T-cell (primary cell): ENCODE measurements at regions of chr17 and their contacts with region 1.

Region 1: DNA sequence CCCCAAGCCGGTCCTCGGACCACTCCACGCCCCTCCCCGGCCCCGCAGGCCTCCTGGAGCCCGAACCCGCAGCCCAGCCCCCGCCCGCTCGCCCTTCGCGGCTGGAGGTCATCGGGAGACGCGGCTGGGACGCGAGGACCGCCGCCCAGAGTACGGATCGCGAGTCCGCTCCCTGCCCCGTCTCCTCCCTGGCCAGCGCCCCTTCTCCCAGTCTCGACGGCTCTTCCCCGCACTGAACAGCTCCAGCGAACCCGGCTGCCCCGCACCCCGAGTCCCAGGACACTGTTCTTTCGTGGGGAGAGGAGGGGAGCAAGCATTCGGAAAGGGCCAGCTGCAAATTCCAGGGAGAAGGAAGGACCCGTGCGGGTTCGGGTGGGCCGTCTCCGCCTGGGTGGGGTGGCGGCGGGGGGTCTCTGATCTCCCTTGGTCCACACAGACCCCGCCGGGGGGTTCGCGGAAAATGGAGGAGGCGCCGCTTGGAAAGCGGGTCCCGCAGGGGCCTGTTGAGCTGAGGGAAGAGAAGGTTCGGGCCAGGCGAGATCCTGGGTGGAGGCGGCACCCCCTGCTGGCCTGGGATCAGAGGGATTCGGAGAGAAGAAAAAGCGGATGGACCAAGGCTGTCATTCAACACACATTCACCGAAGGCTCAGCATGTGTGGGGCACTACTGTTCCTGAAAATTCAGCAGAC is 632 bp upstream of the RTN4RL1 start:
- DNase-seq: peak in 3 of 35 experiments; percentile 13 to 49 (median 29)
- ATAC-seq: no peak
- H3K4me3 ChIP-seq: peak overlapping the region; percentile 46 to 54
- H3K4me3 Mint-ChIP-seq: peak overlapping the region; percentile 78 to 81 (median 80)
- H3K27ac ChIP-seq: no peak overlapping the region
- H3K27ac Mint-ChIP-seq: no peak overlapping the region
- H3K4me1 ChIP-seq: peaks cover 12 to 50% of the 10 kb centered on the region in 2 experiments
- H3K4me1 Mint-ChIP-seq: peaks cover 22 to 34% (median 27%) of the 10 kb centered on the region in 3 donors
- H3K27me3 ChIP-seq: peaks cover 2 to 78% of the 10 kb centered on the region in 2 experiments
- H3K27me3 Mint-ChIP-seq: peaks cover 9 to 25% of the 10 kb centered on the region in 2 donors

Region 2: GRCh38 chr17:2218426-2218825 is 192.7 kb after region 1 on chr17:
- CTCF ChIA-PET with region 1: no interaction called
- POLR2A ChIA-PET with region 1: interaction called in 1 of 2 experiments, 10 read pairs
- DNase-seq: no peak
- ATAC-seq: no peak
- H3K4me3 ChIP-seq: no peak overlapping the region
- H3K4me3 Mint-ChIP-seq: no peak overlapping the region
- H3K27ac ChIP-seq: no peak overlapping the region
- H3K27ac Mint-ChIP-seq: peak overlapping the region; percentile 76 to 81
- H3K4me1 ChIP-seq: peaks cover 25 to 44% of the 10 kb centered on the region in 2 experiments
- H3K4me1 Mint-ChIP-seq: peaks cover 48 to 63% (median 50%) of the 10 kb centered on the region in 3 donors
- H3K27me3 ChIP-seq: no peaks in the 10 kb centered on the region
- H3K27me3 Mint-ChIP-seq: no peaks in the 10 kb centered on the region

Region 3: DNA sequence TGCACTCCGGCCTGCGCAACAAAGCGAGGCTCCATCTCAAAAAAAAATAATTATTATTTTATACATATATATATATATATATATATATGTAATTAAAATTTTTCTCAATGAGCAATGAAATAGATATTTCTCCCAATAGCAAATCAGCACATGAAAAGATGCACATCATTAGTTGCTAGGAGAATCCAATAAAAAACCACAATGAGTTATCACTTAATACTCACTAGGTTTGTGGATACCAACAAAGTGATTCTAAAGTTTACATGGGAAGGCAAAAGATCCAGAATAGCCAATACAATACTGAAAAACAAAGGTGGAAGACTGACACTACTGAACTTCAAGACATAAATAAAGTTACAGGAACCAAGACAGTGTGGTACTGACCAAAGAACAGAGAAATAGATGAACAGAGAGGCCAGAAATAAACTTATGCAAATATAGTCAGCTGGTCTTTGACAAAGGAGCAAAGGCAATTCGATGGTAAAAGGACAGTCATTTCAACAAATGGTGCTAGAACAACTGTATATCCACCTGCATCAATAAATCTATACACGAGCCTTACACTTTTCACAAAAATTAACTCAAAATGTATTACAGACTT is 264.2 kb after region 1 on chr17:
- CTCF ChIA-PET with region 1: no interaction called
- POLR2A ChIA-PET with region 1: no interaction called
- DNase-seq: no peak
- ATAC-seq: no peak
- H3K4me3 ChIP-seq: no peak overlapping the region
- H3K4me3 Mint-ChIP-seq: no peak overlapping the region
- H3K27ac ChIP-seq: no peak overlapping the region
- H3K27ac Mint-ChIP-seq: no peak overlapping the region
- H3K4me1 ChIP-seq: no peaks in the 10 kb centered on the region
- H3K4me1 Mint-ChIP-seq: peaks cover 7 to 14% (median 9%) of the 10 kb centered on the region in 3 donors
- H3K27me3 ChIP-seq: no peaks in the 10 kb centered on the region
- H3K27me3 Mint-ChIP-seq: no peaks in the 10 kb centered on the region